Psoas muscle (tissue), 8 donors: ENCODE measurements at regions of chr13 and their contacts with region 1.

Region 1: DNA sequence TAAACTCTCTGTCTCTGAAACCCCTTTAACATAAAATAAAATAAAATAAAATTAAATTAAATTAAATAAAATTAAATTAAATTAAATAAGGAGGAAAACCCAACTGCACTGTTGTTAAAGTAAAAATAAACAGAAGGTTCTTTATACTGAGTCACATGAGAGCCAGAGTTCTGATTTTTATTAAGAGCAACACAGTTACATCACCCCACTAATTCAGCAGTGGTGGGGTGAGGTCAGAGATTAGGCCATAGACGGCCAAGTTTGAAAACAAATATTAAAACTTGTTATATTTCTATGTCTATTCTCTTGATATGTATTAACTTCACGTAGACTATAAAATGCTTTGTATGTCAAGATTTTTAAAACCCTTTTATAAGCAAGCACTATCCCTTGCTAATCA is 59.5 kb downstream of the MYCBP2 start:
- DNase-seq: no peak
- ATAC-seq: no peak
- H3K4me3 ChIP-seq: no peak overlapping the region
- H3K27ac ChIP-seq: no peak overlapping the region
- H3K4me1 ChIP-seq: no peaks in the 10 kb centered on the region
- H3K27me3 ChIP-seq: no peaks in the 10 kb centered on the region
- CTCF ChIP-seq: no peak

Region 2: GRCh38 chr13:77235456-77236022 is 31.8 kb before region 1 on chr13:
- intact Hi-C with region 1: loop called in 1 of 2 experiments (anchors 2 kb)
- DNase-seq: no peak
- ATAC-seq: no peak
- H3K4me3 ChIP-seq: no peak overlapping the region
- H3K27ac ChIP-seq: no peak overlapping the region
- H3K4me1 ChIP-seq: no peaks in the 10 kb centered on the region
- H3K27me3 ChIP-seq: no peaks in the 10 kb centered on the region
- CTCF ChIP-seq: no peak

Region 3: GRCh38 chr13:77674852-77675251 is 407.5 kb after region 1 on chr13:
- intact Hi-C with region 1: no loop called
- DNase-seq: no peak
- ATAC-seq: no peak
- H3K4me3 ChIP-seq: no peak overlapping the region
- H3K27ac ChIP-seq: no peak overlapping the region
- H3K4me1 ChIP-seq: no peaks in the 10 kb centered on the region
- H3K27me3 ChIP-seq: no peaks in the 10 kb centered on the region
- CTCF ChIP-seq: no peak